Activated CD4-positive, alpha-beta T cell treated with anti-CD3 and anti-CD28 coated beads for 36 hours (primary cell): ENCODE measurements at regions of chr6 and their contacts with region 1.

Region 1: GRCh38 chr6:15378866-15379265 is 133.0 kb downstream of the JARID2 start:
- DNase-seq: no peak
- ATAC-seq: no peak
- H3K4me3 Mint-ChIP-seq: no peak overlapping the region
- H3K27ac Mint-ChIP-seq: no peak overlapping the region
- H3K4me1 Mint-ChIP-seq: peaks cover 51% of the 10 kb centered on the region
- H3K27me3 Mint-ChIP-seq: no peaks in the 10 kb centered on the region

Region 2: DNA sequence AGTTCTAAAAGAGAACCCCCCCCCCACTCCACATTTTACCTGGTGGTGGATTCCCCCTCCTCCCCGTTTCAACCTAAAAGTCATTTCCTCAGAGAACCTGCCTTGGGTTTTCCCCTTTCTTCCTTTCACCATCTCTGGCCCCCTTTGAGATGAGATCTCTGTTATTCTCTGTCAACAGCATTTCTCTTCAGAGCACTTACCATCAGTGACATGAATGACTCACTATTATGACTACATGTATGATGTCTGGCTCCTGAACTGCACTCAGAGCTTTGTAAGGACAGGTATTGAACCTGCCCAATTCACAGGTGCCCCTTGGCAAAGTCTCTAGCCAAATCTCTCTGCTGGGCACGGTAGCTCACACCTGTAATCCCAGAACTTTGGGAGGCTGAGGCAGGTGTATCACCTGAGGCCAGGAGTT is 194.4 kb before region 1 on chr6:
- CTCF ChIA-PET with region 1: no interaction called
- POLR2A ChIA-PET with region 1: no interaction called
- intact Hi-C with region 1: no loop called
- DNase-seq: peak; percentile 62
- ATAC-seq: peak; percentile 98
- H3K4me3 Mint-ChIP-seq: peak overlapping the region; percentile 23
- H3K27ac Mint-ChIP-seq: peak overlapping the region; percentile 96
- H3K4me1 Mint-ChIP-seq: peaks cover 23% of the 10 kb centered on the region
- H3K27me3 Mint-ChIP-seq: no peaks in the 10 kb centered on the region

Region 3: DNA sequence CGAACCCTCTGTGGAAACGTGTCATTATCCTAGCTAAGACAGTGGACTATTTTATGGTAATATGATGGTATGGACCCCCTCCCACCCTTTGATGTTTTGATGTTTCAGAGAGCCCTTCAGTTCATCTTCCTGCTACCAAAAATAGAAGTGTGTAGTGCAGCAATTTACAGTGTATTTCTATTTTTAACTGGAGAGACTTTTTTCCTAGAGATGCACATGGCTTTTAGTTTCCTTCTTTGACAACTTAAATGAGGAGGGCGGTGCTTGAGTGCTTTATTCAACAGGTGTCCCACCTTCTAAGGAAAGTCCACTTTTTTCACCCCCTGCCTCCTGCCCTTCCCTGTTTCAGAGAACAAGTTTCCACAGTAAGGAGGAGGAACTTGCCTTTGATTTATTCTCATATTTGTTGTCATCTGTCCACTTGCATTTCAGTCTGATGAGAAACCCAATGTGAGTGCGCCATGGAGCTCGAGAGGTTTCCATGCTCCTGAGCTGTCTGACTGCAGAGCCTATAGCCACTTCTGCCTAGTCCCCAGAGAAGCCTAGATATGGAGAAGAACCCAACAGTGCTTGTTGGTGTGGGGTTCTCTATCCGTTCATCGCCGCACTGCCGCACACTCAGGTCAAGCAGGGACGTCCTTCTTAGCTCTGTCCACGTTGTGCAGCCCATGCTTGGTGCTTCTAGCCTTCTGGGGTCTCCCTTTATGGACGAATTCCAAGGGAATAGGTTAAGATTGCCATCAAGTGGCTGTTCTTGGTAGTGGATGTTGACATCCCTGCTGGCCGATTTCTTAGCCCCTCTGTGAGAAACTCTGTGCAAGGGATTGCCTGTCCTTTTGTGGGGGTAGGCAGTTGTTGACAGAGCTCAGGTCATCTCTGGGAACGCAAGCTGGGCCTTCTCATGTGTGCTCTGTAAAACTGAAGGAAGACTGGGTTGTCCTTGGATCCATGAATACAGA is 11.2 kb after region 1 on chr6:
- CTCF ChIA-PET with region 1: interaction called, 16 read pairs
- POLR2A ChIA-PET with region 1: no interaction called
- intact Hi-C with region 1: no loop called
- DNase-seq: no peak
- ATAC-seq: no peak
- H3K4me3 Mint-ChIP-seq: no peak overlapping the region
- H3K27ac Mint-ChIP-seq: peak overlapping the region; percentile 63
- H3K4me1 Mint-ChIP-seq: peaks cover 81% of the 10 kb centered on the region
- H3K27me3 Mint-ChIP-seq: no peaks in the 10 kb centered on the region

Region 4: GRCh38 chr6:15413466-15414234 is 34.8 kb after region 1 on chr6:
- CTCF ChIA-PET with region 1: no interaction called
- POLR2A ChIA-PET with region 1: no interaction called
- intact Hi-C with region 1: no loop called
- DNase-seq: no peak
- ATAC-seq: no peak
- H3K4me3 Mint-ChIP-seq: no peak overlapping the region
- H3K27ac Mint-ChIP-seq: peak overlapping the region; percentile 27
- H3K4me1 Mint-ChIP-seq: peaks cover 76% of the 10 kb centered on the region
- H3K27me3 Mint-ChIP-seq: no peaks in the 10 kb centered on the region

Region 5: DNA sequence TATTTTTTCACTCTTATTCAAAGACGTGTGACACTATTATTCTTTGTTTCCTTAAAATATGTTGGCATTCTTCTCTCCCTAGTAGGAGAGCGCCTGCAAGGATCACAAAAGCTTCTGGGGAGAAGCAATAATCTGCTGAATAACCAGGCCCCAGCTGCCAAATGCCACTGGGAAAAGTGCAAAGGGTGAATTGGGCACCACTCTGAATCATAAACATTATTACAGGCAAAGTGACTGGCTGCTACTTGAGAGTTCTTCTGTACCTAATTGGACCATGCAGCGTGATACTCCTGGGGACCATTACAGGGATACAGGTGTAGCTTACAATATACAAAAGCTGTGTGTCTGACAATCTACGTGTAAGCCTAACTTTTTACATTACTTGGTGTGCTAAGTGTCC is 1229.6 kb after region 1 on chr6:
- CTCF ChIA-PET with region 1: no interaction called
- POLR2A ChIA-PET with region 1: no interaction called
- intact Hi-C with region 1: no loop called
- DNase-seq: no peak
- ATAC-seq: no peak
- H3K4me3 Mint-ChIP-seq: no peak overlapping the region
- H3K27ac Mint-ChIP-seq: no peak overlapping the region
- H3K4me1 Mint-ChIP-seq: peaks cover 6% of the 10 kb centered on the region
- H3K27me3 Mint-ChIP-seq: peaks cover 2% of the 10 kb centered on the region